ENCODE measurements at regions of chr13 and their contacts with region 1.

Region 1: GRCh38 chr13:35720690-35721554 is 244.4 kb upstream of the MAB21L1 start:
- DNase-seq: peak; percentile 59
- H3K4me3 Mint-ChIP-seq: peak overlapping the region; percentile 46
- H3K27ac Mint-ChIP-seq: no peak overlapping the region
- H3K4me1 Mint-ChIP-seq: peaks cover 5% of the 10 kb centered on the region
- H3K27me3 Mint-ChIP-seq: no peaks in the 10 kb centered on the region
- CTCF ChIP-seq: peak; percentile 94

Region 2: DNA sequence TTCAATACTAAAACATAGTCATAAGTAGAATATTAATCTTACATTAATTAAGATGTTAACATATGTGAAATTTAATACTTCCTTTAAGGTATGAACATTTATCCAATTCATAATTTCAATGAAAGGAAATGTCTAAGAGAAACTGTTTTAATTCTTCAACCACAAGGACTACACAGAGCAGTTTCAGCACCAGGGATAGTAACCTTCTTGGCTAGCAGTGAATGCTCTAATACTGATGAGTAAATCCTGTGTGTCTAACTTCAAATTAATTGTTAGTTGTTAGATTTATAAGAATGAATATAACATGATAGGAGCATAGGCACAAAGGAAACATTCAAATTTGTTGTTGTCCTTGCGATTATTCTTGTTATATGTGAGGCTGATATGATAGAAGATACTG is 794.4 kb before region 1 on chr13:
- CTCF ChIA-PET with region 1: no interaction called
- POLR2A ChIA-PET with region 1: no interaction called
- intact Hi-C with region 1: no loop called
- DNase-seq: peak; percentile 64
- H3K4me3 Mint-ChIP-seq: no peak overlapping the region
- H3K27ac Mint-ChIP-seq: no peak overlapping the region
- H3K4me1 Mint-ChIP-seq: no peaks in the 10 kb centered on the region
- H3K27me3 Mint-ChIP-seq: no peaks in the 10 kb centered on the region
- CTCF ChIP-seq: no peak

Region 3: DNA sequence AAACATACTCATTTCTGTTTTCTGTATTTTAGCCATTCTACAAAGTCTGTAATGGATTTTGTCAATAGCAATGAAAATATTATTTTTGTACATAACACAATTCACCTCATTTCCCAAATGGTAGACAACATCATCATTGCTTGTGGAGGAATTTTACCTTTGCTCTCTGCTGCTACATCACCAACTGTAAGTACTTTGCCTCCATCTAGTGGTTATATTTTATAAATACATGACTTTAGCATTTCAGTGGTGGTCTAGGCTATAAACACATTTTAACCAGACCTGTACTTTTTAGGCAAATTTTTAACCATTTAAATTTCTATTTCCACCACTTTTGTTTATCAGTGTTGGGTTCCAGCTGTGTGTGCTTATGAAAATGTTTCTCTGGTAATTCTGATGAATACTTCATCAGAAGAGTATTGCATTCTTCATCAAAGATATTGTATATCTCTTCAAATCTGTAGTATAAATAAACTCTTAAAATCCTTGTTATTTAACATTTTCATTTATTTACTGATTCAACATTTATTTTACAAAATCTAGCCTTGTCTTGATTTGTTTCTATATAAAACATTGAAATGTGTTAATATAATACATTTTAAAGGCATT is 556.5 kb before region 1 on chr13:
- CTCF ChIA-PET with region 1: no interaction called
- POLR2A ChIA-PET with region 1: interaction called, 5 read pairs
- intact Hi-C with region 1: loop called (anchors 2 kb)
- DNase-seq: peak; percentile 46
- H3K4me3 Mint-ChIP-seq: no peak overlapping the region
- H3K27ac Mint-ChIP-seq: no peak overlapping the region
- H3K4me1 Mint-ChIP-seq: no peaks in the 10 kb centered on the region
- H3K27me3 Mint-ChIP-seq: no peaks in the 10 kb centered on the region
- CTCF ChIP-seq: peak; percentile 66

Region 4: DNA sequence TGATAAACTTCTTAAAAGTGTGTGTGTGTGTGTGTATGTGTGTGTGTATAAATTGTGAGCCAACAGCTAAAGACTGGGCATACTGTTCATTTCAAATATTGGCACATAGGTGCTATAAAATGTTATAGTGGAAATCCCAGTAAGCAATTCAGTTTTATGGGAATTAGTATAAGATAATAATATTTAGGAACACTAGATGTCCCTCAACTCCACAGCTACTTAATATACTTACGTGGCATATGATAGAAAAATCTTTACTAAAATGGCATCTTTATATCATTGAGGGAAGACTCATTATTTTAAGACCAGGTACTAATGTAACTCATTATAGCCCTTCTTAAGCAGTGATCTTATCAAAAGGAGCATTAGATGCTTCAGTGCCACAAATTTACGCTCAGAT is 510.7 kb before region 1 on chr13:
- CTCF ChIA-PET with region 1: interaction called, 7 read pairs
- POLR2A ChIA-PET with region 1: no interaction called
- intact Hi-C with region 1: loop called (anchors 5 kb)
- DNase-seq: peak; percentile 10
- H3K4me3 Mint-ChIP-seq: no peak overlapping the region
- H3K27ac Mint-ChIP-seq: no peak overlapping the region
- H3K4me1 Mint-ChIP-seq: no peaks in the 10 kb centered on the region
- H3K27me3 Mint-ChIP-seq: no peaks in the 10 kb centered on the region
- CTCF ChIP-seq: no peak

Region 5: GRCh38 chr13:35630551-35631275 is 90.2 kb before region 1 on chr13:
- CTCF ChIA-PET with region 1: interaction called, 23 read pairs
- POLR2A ChIA-PET with region 1: no interaction called
- intact Hi-C with region 1: loop called (anchors 1 kb)
- DNase-seq: peak; percentile 66
- H3K4me3 Mint-ChIP-seq: no peak overlapping the region
- H3K27ac Mint-ChIP-seq: no peak overlapping the region
- H3K4me1 Mint-ChIP-seq: no peaks in the 10 kb centered on the region
- H3K27me3 Mint-ChIP-seq: no peaks in the 10 kb centered on the region
- CTCF ChIP-seq: peak; percentile 65

Measured in MCF 10A (cell line).